ENCODE measurements at regions of chr12 and their contacts with region 1.

Region 1: DNA sequence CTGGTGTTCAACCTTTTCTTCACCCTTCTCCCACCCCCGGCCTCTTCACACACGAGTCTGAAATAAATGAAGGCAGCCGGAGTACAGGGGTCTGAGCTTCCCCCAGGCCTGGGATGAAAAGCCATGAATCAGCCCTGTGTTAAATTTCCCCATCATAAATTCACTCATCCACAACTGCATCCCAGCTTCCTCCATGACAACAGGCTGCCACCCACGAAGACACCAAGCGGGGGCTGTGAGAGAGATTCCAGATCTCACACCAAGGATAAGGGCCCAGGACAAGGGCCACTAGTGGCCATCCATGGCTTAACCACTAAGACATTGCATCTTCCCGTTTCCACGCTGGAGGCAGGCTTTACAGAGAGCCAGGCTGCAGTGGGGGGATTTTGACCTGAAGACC is 93.9 kb upstream of the NCOR2 start:
- DNase-seq: peak in 29 of 42 donors; percentile 34 to 80 (median 59)

Region 2: GRCh38 chr12:124745891-124746570 is 84.7 kb after region 1 on chr12:
- intact Hi-C with region 1: loop called (anchors 5 kb)
- DNase-seq: peak; percentile 86 to 99 (median 96)

Region 3: GRCh38 chr12:124759841-124760503 is 98.6 kb after region 1 on chr12:
- intact Hi-C with region 1: no loop called
- DNase-seq: peak in 3 of 42 donors; percentile 44 to 56 (median 52)

Measured in head of caudate nucleus (tissue), 42 donors.